H1 (cell line): ENCODE measurements at regions of chr17 and their contacts with region 1.

Region 1: GRCh38 chr17:40686192-40686591 is 17.4 kb downstream of the KRT24 start:
- DNase-seq: no peak
- H3K4me3 ChIP-seq: no peak overlapping the region
- H3K27ac ChIP-seq: no peak overlapping the region
- H3K4me1 ChIP-seq: no peaks in the 10 kb centered on the region
- H3K27me3 ChIP-seq: no peaks in the 10 kb centered on the region; a peak in 1 of 7 replicates
- CTCF ChIP-seq: no peak
- EP300 ChIP-seq: no peak
- POLR2A ChIP-seq: no peak
- RAD21 ChIP-seq: no peak

Region 2: GRCh38 chr17:40699371-40699770 is 13.2 kb after region 1 on chr17:
- CTCF ChIA-PET with region 1: interaction called, 10 read pairs
- POLR2A ChIA-PET with region 1: no interaction called
- DNase-seq: no peak
- H3K4me3 ChIP-seq: no peak overlapping the region
- H3K27ac ChIP-seq: no peak overlapping the region
- H3K4me1 ChIP-seq: no peaks in the 10 kb centered on the region
- H3K27me3 ChIP-seq: no peaks in the 10 kb centered on the region
- CTCF ChIP-seq: no peak
- EP300 ChIP-seq: no peak
- POLR2A ChIP-seq: no peak
- RAD21 ChIP-seq: no peak